ENCODE measurements at regions of chr7 and their contacts with region 1.

Region 1: GRCh38 chr7:45157653-45158401 is at the start of gene RAMP3:
- DNase-seq: peak; percentile 45
- H3K4me3 ChIP-seq: peak within 1 kb of the TSS; percentile 75
- H3K27ac ChIP-seq: peak within 1 kb of the TSS; percentile 91
- H3K4me1 ChIP-seq: peaks cover 27% of the 10 kb centered on the region
- H3K27me3 ChIP-seq: peaks cover 37% of the 10 kb centered on the region
- CTCF ChIP-seq: no peak
- total RNA-seq, gene RAMP3: 30.7 TPM

Region 2: DNA sequence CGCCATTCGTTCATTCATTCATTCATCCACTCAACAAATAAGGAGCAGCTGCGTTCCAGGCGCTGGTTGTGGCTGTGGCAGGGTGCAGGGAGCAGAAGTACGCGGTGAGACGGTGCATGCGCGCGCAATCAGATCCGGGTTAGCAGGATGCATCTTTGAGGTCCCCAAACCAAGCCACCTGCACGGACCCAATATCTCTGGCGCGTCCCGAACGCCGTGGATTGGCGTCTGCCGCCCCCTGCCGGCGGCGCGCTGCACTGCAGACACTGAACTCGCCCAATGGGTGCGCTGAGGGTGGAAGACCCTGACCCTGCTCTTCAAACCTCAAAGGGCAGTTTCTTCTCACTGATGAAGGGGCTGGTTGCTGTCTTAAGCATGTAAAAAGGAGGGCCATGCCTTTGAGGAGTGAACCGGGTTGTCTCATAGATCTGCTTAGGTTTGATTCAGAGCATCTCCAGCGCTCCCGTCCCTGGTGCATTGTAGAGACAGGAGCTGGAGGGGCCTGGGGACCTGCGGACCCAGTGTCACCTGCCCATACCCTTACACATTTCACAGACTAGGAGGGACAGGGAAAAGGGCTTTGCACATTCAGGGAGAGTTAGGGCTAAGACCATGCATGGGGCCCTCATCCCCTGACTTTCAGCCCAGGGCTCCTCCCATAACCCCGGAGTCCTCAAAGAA is 102.3 kb after region 1 on chr7:
- intact Hi-C with region 1: loop called (anchors 5 kb)
- DNase-seq: peak; percentile 66
- H3K4me3 ChIP-seq: no peak overlapping the region
- H3K27ac ChIP-seq: no peak overlapping the region
- H3K4me1 ChIP-seq: peaks cover 13% of the 10 kb centered on the region
- H3K27me3 ChIP-seq: peaks cover 11% of the 10 kb centered on the region
- CTCF ChIP-seq: peak; percentile 97

Region 3: GRCh38 chr7:45267266-45267665 is 109.4 kb after region 1 on chr7:
- intact Hi-C with region 1: loop called (anchors 5 kb)
- DNase-seq: no peak
- H3K4me3 ChIP-seq: no peak overlapping the region
- H3K27ac ChIP-seq: no peak overlapping the region
- H3K4me1 ChIP-seq: no peaks in the 10 kb centered on the region
- H3K27me3 ChIP-seq: peaks cover 9% of the 10 kb centered on the region
- CTCF ChIP-seq: no peak

Measured in left ventricle myocardium inferior (tissue), 1 donor.